Activated T-helper 2 cell treated with anti-CD3 and anti-CD28 coated beads, Interferon-gamma antibody, Interleukin-2, Interleukin-4, amounts not matched to agents 10 μg/mL and 5 μg/mL and 100 μg/mL, durations not matched to agents 14 hours and 24 hours and 36 hours (primary cell): ENCODE measurements at regions of chr9 and their contacts with region 1.

Region 1: GRCh38 chr9:132354637-132355355 is at the start of gene SETX:
- DNase-seq: peak; percentile 89
- H3K4me3 Mint-ChIP-seq: peak within 1 kb of the TSS; percentile 91
- H3K27ac Mint-ChIP-seq: peak within 1 kb of the TSS; percentile 93
- H3K4me1 Mint-ChIP-seq: peaks cover 37% of the 10 kb centered on the region
- H3K27me3 Mint-ChIP-seq: no peaks in the 10 kb centered on the region
- total RNA-seq, gene SETX: 49.8 and 51.0 TPM in 2 replicates

Region 2: GRCh38 chr9:132006677-132007370 is 348.0 kb before region 1 on chr9:
- intact Hi-C with region 1: loop called (anchors 10 kb)
- DNase-seq: peak; percentile 33
- H3K4me3 Mint-ChIP-seq: no peak overlapping the region
- H3K27ac Mint-ChIP-seq: no peak overlapping the region
- H3K4me1 Mint-ChIP-seq: peaks cover 36% of the 10 kb centered on the region
- H3K27me3 Mint-ChIP-seq: no peaks in the 10 kb centered on the region

Region 3: GRCh38 chr9:132341177-132341840 is 13.5 kb before region 1 on chr9:
- intact Hi-C with region 1: no loop called
- DNase-seq: no peak
- H3K4me3 Mint-ChIP-seq: no peak overlapping the region
- H3K27ac Mint-ChIP-seq: no peak overlapping the region
- H3K4me1 Mint-ChIP-seq: peaks cover 3% of the 10 kb centered on the region
- H3K27me3 Mint-ChIP-seq: no peaks in the 10 kb centered on the region

Region 4: DNA sequence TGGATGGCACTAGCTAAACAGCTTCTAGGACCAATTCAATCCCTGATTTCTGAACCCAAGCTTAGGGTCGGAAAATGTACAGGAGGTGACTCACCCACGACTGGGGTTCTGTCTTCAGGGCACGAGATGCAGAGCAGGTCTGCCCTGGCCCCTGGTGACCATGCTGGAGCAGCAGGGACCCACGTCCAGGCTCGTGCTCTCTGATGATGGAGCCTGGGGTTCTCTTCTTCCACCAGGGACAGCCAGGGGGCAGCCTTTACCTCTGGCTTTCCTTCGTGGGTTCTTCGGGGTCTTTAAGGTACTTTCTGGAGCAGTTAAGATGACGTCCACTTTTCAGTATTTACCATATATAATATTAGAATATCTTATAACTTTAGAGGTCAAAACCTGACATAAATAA is 57.3 kb after region 1 on chr9:
- intact Hi-C with region 1: no loop called
- DNase-seq: no peak
- H3K4me3 Mint-ChIP-seq: no peak overlapping the region
- H3K27ac Mint-ChIP-seq: no peak overlapping the region
- H3K4me1 Mint-ChIP-seq: peaks cover 17% of the 10 kb centered on the region
- H3K27me3 Mint-ChIP-seq: peaks cover 53% of the 10 kb centered on the region